ENCODE measurements at regions of chr1 and their contacts with region 1.

Region 1: GRCh38 chr1:214215583-214215982 is 65.4 kb upstream of the SMYD2 start:
- DNase-seq: no peak
- ATAC-seq: no peak

Region 2: GRCh38 chr1:214261206-214262123 is 45.9 kb after region 1 on chr1:
- intact Hi-C with region 1: loop called (anchors 2 kb)
- DNase-seq: peak; percentile 90
- ATAC-seq: peak; percentile 98

Region 3: DNA sequence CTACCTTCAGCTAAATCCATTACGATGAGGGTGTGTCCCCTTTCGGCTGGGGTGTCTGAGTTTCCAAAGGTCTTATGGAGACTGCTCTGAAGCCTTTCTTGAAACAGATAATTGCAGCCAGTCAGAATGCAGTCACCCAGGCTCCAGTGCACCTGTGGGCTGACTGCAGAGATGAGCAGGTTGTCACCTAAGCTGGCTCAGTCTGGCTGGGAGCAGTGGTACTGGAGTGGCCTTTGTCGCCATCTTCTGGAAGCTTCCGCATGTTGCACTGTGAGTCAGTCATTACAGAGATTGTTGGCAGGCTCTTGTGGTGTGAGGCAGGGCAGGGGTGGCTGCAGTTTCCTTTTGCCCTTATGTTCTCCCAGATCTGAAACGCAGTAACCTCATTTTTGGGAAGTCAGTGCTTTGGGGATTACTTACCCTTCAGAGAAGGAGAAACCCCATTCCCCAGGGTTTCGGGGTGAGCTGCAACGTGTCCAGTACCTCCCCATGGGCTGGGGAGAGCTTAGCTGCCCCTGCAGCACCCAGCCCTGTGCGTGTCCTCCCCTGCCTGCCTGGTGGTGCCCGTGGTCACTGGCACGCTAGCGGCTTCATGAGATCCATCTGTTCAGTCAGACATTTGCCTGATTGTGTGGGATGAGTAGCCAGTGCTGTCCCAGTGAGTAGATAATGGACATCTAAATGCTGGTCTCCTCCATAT is 113.3 kb after region 1 on chr1:
- intact Hi-C with region 1: loop called (anchors 1 kb)
- DNase-seq: peak; percentile 73
- ATAC-seq: peak; percentile 90

Measured in Right ventricle myocardium inferior (tissue), 1 donor.